ENCODE measurements at regions of chr17 and their contacts with region 1.

Region 1: GRCh38 chr17:6454957-6455705 is 10.9 kb downstream of the PIMREG start:
- DNase-seq: peak in 1 of 2 experiments; percentile 73
- H3K4me3 ChIP-seq: peak overlapping the region; percentile 49 to 75 (median 74)
- H3K27ac ChIP-seq: peak overlapping the region; percentile 51; the same call in 1 of the 2 replicates
- H3K4me1 ChIP-seq: peaks cover 2 to 50% (median 29%) of the 10 kb centered on the region in 4 experiments
- H3K27me3 ChIP-seq: no peaks in the 10 kb centered on the region; a peak in 3 of 7 replicates
- CTCF ChIP-seq: peak in 1 of 3 experiments; percentile 0; a peak in 1 of 4 replicates
- EP300 ChIP-seq: no peak
- POLR2A ChIP-seq: peak in 1 of 2 experiments; percentile 53; a peak in 1 of 3 replicates
- RAD21 ChIP-seq: no peak

Region 2: DNA sequence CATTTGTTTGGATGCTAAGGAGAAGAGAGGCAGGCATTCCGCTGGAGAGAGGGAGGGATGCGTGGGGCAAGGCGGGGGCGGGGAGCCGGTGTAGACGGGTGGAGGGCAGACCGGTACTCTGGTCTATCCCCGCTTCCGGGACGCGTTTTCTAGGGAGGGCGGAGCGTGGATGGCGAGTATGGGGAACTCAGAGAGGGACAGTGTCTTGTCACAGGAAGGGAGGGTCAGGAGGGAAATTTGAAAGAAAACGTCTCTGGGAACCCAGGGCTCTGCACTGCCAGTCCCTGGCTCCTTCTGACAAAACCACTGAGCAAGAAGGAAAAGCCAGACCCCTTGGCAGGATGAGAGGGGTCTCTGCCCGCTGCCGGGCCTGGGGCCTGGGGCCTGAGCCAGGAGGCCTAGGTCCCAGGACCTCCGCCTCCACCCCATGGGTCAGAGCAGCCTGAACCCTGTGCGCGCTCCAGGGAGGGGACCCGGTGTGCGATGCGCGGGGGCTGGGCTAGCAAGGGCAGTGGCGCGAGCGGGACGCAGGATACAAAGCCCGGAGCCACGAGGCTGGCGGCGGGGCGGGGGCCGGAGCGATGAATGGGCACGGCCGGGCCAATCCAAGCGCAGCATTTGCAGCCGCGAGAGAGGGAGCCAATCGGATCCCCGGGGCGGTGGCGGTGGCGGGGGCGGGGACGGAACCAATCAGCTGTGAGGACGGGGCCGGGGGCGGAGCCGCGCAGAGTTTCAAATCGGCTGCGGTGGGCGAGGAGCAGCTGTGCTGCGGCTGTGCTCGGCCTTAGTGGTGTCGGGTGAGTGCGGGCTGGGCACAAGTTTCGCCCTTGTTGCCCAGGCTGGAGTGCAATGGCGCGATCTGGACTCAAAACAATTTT is 11.2 kb before region 1 on chr17 and contains the start of gene PIMREG:
- CTCF ChIA-PET with region 1: interaction called, 9 read pairs
- POLR2A ChIA-PET with region 1: interaction called, 58 read pairs
- DNase-seq: peak; percentile 86 to 97
- H3K4me3 ChIP-seq: peak within 1 kb of the TSS; percentile 83 to 89 (median 87)
- H3K27ac ChIP-seq: peak within 1 kb of the TSS; percentile 95
- H3K4me1 ChIP-seq: peaks cover 6 to 20% (median 10%) of the 10 kb centered on the region in 4 experiments
- H3K27me3 ChIP-seq: no peaks in the 10 kb centered on the region
- CTCF ChIP-seq: peak in 1 of 3 experiments; percentile 2; a peak in 1 of 4 replicates
- EP300 ChIP-seq: no peak
- POLR2A ChIP-seq: peak; percentile 78 to 95
- RAD21 ChIP-seq: no peak
- total RNA-seq, gene PIMREG: 133 and 143 TPM in 2 replicates

Measured in H1 (cell line).